A673 (cell line): ENCODE measurements at regions of chr16 and their contacts with region 1.

Region 1: DNA sequence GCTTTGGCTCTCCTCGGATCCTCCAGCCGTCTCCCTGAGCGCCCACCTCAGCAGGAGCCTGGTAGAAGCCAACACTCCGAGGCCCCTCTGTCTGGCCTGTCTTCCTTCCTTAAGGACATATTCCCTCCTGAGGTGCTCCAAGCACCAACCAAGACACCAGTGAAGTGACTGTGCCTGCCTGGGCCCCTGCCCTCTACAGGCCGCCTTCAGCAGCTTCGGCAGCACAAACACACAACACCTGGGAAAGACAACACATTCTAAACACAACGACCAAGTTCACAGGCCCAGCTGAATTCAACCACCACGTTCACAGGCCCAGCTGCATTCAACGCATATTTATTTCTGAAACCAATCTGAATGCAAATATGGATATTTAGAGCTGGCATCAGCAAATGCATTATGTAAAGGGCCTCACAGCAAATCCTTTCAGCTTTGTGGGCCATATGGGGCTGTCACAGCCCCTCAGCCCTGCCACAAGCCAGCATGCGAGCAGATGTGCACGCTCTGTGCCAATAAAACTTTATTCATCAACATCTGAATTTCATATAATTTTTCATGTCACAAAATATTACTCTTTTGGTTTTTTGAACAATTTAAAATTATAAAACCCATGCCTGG is 12.2 kb downstream of the GALNS start:
- DNase-seq: no peak
- H3K4me3 ChIP-seq: no peak overlapping the region
- H3K27ac ChIP-seq: no peak overlapping the region
- H3K4me1 ChIP-seq: no peaks in the 10 kb centered on the region
- H3K27me3 ChIP-seq: no peaks in the 10 kb centered on the region
- CTCF ChIP-seq: no peak

Region 2: DNA sequence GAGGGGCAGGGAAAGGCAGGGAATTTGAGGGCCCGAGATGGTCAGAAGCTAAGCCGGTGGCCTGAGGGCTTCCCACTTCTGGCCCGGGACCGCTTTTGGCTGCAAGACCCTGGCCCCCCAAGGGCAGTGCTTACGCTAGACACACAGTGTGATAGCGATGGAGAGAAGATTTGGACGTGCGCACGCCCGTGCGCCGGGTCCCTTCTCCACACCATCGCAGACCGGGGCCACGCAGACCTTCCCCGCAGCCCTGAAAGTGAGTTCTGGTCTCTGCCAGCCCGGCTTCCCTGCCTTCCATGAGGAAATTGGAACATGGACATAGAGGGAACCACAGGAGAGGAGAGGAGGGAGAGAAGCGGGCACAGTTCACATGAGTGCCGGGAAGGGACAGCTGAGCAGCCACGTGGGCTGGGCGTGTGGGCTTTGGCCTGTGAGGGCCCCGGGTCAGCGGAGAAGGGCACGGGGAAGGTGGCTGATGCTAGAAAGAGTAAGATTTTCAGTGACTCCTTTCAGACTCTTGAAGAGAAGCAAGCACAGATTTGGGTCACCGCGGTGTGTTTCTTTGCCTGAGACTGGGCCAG is 367.6 kb before region 1 on chr16:
- CTCF ChIA-PET with region 1: interaction called, 15 read pairs
- POLR2A ChIA-PET with region 1: no interaction called
- intact Hi-C with region 1: no loop called
- DNase-seq: no peak
- H3K4me3 ChIP-seq: no peak overlapping the region
- H3K27ac ChIP-seq: no peak overlapping the region
- H3K4me1 ChIP-seq: peaks cover 5% of the 10 kb centered on the region
- H3K27me3 ChIP-seq: no peaks in the 10 kb centered on the region
- CTCF ChIP-seq: no peak

Region 3: DNA sequence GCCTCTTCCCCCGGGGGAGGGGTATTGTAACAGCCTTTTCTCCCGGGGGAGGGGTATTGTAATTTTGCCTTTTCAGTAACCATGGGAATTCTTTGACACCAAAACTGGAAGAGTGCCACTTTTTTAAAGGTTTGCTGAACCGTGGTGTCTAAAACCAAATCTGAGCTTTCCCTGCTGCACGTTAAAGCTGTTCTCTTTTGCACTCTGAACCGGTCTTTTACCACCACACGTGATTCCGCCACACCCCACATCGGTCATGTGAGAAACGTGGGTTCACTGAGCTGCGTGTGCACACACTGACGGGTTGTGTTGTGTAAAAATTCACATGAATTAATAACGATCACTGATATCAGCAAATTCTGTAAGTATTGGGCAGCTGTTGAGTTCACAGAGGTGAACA is 239.9 kb after region 1 on chr16:
- CTCF ChIA-PET with region 1: no interaction called
- POLR2A ChIA-PET with region 1: interaction called, 13 read pairs
- intact Hi-C with region 1: no loop called
- DNase-seq: peak; percentile 56
- H3K4me3 ChIP-seq: no peak overlapping the region
- H3K27ac ChIP-seq: no peak overlapping the region
- H3K4me1 ChIP-seq: peaks cover 6% of the 10 kb centered on the region
- H3K27me3 ChIP-seq: peaks cover 23% of the 10 kb centered on the region
- CTCF ChIP-seq: no peak